GM18951 (cell line): ENCODE measurements at regions of chr1 and their contacts with region 1.

Region 1: GRCh38 chr1:61011561-61012263 is 70.6 kb upstream of the NFIA start:
- POLR2A ChIP-seq: no peak

Region 2: GRCh38 chr1:60281360-60281932 is 730.3 kb before region 1 on chr1:
- in situ Hi-C with region 1: loop called (anchors 10 kb)
- POLR2A ChIP-seq: no peak